Activated naive CD4-positive, alpha-beta T cell treated with anti-CD3 and anti-CD28 coated beads for 36 hours (primary cell): ENCODE measurements at regions of chr14 and their contacts with region 1.

Region 1: DNA sequence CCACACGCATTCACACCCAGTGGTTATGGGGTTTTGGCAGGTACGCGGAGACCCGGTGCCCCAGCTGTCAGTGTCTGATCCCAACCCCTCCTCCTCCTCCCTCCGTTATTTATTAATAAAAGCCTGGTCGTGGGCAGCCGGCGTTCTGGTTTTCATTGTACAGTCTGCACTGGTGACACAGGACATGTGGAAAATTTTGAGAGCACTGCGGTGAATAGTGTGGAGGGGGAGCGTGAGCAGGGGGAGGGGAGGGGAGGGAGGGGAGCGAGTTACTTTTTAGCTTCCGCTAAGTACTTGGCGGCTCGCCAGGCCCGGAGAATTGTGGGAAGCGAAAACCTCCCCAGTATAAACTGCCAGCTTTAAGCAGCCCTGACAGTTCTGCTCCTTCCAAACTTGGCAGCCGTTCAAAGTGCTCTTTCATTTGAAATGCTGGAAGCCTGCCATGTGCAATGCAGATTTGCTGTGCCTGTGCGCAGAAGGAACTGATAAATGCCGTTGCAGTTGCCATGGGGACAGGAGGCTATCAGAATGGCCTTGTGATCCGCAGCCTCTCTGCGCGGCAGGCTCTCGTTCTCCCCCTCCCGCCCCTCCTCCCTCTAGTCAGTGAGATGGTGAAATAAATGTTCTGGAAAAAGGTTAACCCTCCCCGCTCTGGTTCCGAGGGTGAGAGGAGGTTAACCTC is 11.7 kb upstream of the IRF2BPL start:
- DNase-seq: peak; percentile 99
- H3K4me3 Mint-ChIP-seq: peak overlapping the region; percentile 77
- H3K27ac Mint-ChIP-seq: peak overlapping the region; percentile 99
- H3K4me1 Mint-ChIP-seq: peaks cover 88% of the 10 kb centered on the region
- H3K27me3 Mint-ChIP-seq: no peaks in the 10 kb centered on the region

Region 2: GRCh38 chr14:75542588-75543091 is 1497.6 kb before region 1 on chr14:
- CTCF ChIA-PET with region 1: no interaction called
- intact Hi-C with region 1: loop called (anchors 5 kb)
- DNase-seq: peak; percentile 97
- H3K4me3 Mint-ChIP-seq: peak overlapping the region; percentile 65
- H3K27ac Mint-ChIP-seq: peak overlapping the region; percentile 99
- H3K4me1 Mint-ChIP-seq: peaks cover 84% of the 10 kb centered on the region
- H3K27me3 Mint-ChIP-seq: no peaks in the 10 kb centered on the region

Region 3: DNA sequence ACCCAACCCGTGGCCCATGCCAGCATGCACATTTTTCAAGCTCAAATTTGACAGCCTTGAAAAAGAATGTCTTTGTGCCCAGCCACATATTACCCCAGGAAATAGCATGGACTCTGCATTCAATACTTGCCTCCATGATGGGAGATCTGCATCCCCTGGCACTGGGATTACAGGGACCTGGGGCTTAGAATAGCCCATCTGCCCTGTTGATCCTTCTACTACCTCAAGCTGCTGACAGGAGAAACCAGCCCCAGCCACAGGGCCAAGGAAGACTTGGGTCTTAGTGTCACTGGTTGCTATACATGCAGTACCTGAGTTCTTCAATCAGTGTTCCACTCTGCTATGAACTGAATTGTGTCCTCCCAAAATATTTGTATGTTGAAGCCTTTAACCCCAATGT is 128.7 kb before region 1 on chr14:
- CTCF ChIA-PET with region 1: interaction called, 76 read pairs
- intact Hi-C with region 1: no loop called
- DNase-seq: no peak
- H3K4me3 Mint-ChIP-seq: no peak overlapping the region
- H3K27ac Mint-ChIP-seq: no peak overlapping the region
- H3K4me1 Mint-ChIP-seq: peaks cover 15% of the 10 kb centered on the region
- H3K27me3 Mint-ChIP-seq: no peaks in the 10 kb centered on the region

Region 4: GRCh38 chr14:76962303-76962660 is 77.9 kb before region 1 on chr14:
- CTCF ChIA-PET with region 1: interaction called, 7 read pairs
- intact Hi-C with region 1: loop called (anchors 1 kb)
- DNase-seq: no peak
- H3K4me3 Mint-ChIP-seq: peak overlapping the region; percentile 68
- H3K27ac Mint-ChIP-seq: peak overlapping the region; percentile 98
- H3K4me1 Mint-ChIP-seq: peaks cover 90% of the 10 kb centered on the region
- H3K27me3 Mint-ChIP-seq: no peaks in the 10 kb centered on the region

Region 5: DNA sequence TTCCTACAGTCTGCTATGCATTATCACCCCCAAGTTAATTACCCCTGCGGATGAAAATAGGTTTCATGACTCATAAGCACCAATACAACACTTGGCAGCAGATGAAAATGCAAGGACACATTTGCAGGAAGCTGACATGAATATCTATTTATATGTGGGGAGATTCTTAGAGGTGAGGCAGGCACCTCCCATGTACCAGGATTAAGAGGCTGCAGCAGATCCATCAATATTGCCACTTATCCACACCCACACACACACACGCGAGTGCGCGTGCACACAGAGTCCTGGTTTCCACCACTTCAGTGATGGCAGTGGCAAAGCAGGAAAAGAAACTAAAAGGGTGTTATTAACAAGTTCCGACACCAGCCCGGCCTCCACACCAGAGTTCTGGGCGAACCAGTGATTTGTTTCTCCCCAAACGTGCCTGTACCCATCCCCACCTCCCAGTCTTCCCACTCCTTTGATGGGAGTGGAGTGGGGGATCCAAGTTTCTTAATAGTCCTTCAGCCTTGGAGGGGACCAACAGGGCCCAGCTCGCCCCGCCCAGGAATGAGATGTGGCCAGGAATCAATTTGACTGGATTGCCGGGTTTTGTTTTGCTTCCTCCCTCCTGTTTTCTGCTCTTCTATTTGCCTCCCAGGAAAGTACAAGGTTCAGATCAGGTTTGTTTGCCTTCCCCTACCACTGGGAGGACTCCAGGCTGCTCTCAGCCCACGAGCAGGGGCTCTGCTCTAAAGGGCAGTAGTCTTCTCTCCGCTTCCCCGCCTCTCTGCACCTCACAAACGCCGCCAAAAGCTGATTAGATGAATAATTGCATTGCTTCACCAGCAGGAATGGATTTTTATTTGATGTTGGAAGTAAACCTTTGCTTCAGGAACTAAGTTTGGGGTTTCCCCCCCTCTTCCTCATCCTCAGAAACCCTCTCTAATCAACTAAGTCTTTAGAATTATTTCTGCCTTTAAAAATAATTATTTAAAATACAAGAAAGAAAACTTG is 16.9 kb before region 1 on chr14:
- CTCF ChIA-PET with region 1: interaction called, 11 read pairs
- intact Hi-C with region 1: loop called (anchors 1 kb)
- DNase-seq: peak; percentile 73
- H3K4me3 Mint-ChIP-seq: peak overlapping the region; percentile 26
- H3K27ac Mint-ChIP-seq: peak overlapping the region; percentile 86
- H3K4me1 Mint-ChIP-seq: peaks cover 49% of the 10 kb centered on the region
- H3K27me3 Mint-ChIP-seq: no peaks in the 10 kb centered on the region

Region 6: DNA sequence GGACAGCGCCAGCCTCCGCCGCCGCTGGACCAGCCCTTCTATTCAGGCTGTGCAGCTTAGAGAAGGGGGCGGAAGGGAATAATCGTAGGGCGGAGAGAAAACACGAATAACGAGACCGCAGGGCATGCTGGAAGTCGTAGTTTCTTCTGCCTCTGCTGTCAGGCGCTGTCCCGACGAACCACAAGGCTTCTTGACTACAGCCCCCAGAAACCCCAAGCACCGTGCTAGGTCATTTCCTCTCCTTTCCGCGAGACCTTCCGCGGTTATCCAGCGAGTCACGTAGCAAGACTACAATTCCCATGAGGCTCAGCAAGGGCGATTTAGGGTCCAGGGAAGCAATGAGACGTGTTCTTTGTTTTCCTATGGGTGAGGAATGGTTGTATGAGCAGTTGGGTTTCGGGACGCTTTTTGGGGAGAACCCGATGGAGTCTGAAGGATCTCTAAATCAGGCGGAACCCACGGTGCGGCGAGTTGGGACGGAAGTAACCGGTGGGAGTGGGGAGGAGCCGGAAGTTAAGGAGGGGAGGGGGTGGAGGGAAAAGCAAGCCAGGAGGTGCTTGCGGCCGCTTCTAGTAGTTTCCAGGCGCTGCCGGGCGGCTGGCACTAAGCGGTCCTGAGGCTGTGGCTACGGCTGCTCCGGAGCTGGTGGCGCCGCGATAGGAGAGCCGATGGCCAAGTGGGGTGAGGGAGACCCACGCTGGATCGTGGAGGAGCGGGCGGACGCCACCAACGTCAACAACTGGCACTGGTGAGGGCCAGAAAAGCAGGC is 417.5 kb after region 1 on chr14 and contains the starts of genes AHSA1 and VIPAS39:
- CTCF ChIA-PET with region 1: no interaction called
- intact Hi-C with region 1: loop called (anchors 5 kb)
- DNase-seq: peak; percentile 98
- H3K4me3 Mint-ChIP-seq: peak within 1 kb of the TSS; percentile 100
- H3K27ac Mint-ChIP-seq: peak within 1 kb of the TSS; percentile 100
- H3K4me1 Mint-ChIP-seq: peaks cover 32% of the 10 kb centered on the region
- H3K27me3 Mint-ChIP-seq: no peaks in the 10 kb centered on the region
- total RNA-seq, gene AHSA1: 230 to 246 TPM
- total RNA-seq, gene VIPAS39: 12.3 to 13.3 TPM